Endothelial cell of umbilical vein (primary cell): ENCODE measurements at regions of chr20 and their contacts with region 1.

Region 1: DNA sequence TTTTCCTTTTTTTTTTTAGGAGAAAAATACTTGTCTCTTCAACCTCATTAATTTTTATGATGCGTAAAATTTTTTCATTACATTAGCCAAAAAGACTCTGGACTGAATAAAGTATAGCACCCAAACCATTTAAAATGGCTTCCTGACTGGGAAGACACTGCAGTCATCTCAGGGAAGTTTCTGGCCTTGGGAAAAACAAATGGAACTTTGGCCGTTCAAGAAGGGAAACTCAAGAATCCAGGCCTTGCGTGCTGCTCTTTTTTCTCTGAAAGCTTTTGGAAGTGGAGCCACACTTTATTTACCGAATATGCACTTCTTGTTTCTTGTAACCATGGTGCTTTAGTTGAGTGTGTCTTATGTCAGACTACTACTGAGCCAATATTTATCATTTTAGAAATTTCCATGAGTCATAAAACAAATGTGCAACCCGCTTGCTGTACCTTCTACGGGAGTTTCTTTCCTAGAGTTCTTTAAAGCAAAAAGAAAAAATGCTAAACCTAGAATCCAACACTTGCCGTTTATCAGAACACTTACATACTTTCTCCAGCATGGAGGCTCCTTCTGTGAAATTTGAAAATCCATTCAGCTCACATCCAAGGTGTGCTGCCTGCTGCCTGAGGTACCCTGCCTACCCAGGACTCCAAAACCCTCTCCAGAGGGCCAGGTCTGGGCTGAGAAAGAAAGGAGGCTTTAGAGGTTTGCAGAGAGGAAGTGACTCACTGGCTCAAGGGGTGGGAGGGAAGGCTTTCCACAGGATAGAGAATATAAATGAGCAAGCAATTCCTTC is 11.5 kb upstream of the DSTN start:
- DNase-seq: peak; percentile 95
- H3K4me3 ChIP-seq: peak overlapping the region; percentile 2 to 38 (median 4)
- H3K27ac ChIP-seq: peak overlapping the region; percentile 96
- H3K4me1 ChIP-seq: peaks cover 41% of the 10 kb centered on the region
- H3K27me3 ChIP-seq: no peaks in the 10 kb centered on the region
- CTCF ChIP-seq: no peak
- POLR2A ChIP-seq: peak; percentile 89

Region 2: GRCh38 chr20:17542993-17543412 is 15.3 kb before region 1 on chr20:
- CTCF ChIA-PET with region 1: interaction called, 30 read pairs
- POLR2A ChIA-PET with region 1: interaction called, 3 read pairs
- dilution Hi-C with region 1: no loop called
- intact Hi-C with region 1: no loop called
- DNase-seq: peak; percentile 67
- H3K4me3 ChIP-seq: no peak overlapping the region
- H3K27ac ChIP-seq: no peak overlapping the region
- H3K4me1 ChIP-seq: no peaks in the 10 kb centered on the region
- H3K27me3 ChIP-seq: no peaks in the 10 kb centered on the region
- CTCF ChIP-seq: no peak
- POLR2A ChIP-seq: no peak

Region 3: DNA sequence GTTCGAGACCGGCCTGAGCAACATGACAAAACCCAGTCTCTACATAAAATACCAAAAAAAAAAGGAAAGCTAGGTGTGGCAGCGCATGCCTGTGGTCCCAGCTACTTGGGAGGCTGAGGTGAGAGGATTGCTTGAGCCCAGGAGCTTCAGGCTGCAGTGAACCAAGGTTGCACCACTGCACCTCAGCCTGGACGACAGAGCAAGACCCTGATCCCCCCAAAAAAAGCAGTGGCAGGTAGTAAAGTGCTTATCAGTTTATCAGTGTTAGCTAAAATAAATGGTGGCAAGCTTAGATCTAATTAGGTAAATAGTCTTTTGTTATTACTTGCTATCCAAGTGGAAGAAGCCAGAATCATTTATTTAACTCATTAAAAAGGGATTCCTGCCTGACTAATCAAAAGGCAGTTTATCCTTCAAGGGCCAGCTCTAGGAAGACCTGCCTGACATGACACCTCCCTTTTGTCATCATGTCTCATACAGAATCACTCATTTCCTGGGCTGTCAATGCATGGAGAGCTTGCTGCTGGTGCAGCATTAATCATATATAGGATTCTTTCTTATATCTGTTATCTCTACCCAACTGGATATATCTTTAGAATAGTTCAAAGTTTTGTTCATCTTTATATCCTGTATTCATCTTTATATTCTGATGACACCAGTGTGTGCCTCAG is 21.2 kb after region 1 on chr20:
- CTCF ChIA-PET with region 1: interaction called, 10 read pairs
- POLR2A ChIA-PET with region 1: no interaction called
- dilution Hi-C with region 1: no loop called
- intact Hi-C with region 1: no loop called
- DNase-seq: no peak
- H3K4me3 ChIP-seq: no peak overlapping the region
- H3K27ac ChIP-seq: no peak overlapping the region
- H3K4me1 ChIP-seq: peaks cover 2% of the 10 kb centered on the region
- H3K27me3 ChIP-seq: no peaks in the 10 kb centered on the region
- CTCF ChIP-seq: no peak
- POLR2A ChIP-seq: no peak